ENCODE measurements at regions of chr1 and their contacts with region 1.

Region 1: GRCh38 chr1:40450495-40451237 is 390 bp downstream of the ZFP69B start:
- DNase-seq: peak; percentile 19 to 83 (median 48)
- ATAC-seq: peak; percentile 65 to 76 (median 74)
- H3K4me3 ChIP-seq: peak overlapping the region; percentile 59 to 90
- H3K4me3 Mint-ChIP-seq: peak overlapping the region; percentile 84 to 94 (median 87)
- H3K27ac ChIP-seq: peak overlapping the region; percentile 76
- H3K27ac Mint-ChIP-seq: peak overlapping the region; percentile 86 to 87
- H3K4me1 ChIP-seq: peaks cover 7 to 18% of the 10 kb centered on the region in 2 experiments
- H3K4me1 Mint-ChIP-seq: peaks cover 21 to 25% (median 24%) of the 10 kb centered on the region in 3 donors
- H3K27me3 ChIP-seq: no peaks in the 10 kb centered on the region
- H3K27me3 Mint-ChIP-seq: no peaks in the 10 kb centered on the region

Region 2: GRCh38 chr1:40476924-40477677 is 26.4 kb after region 1 on chr1 and contains the start of gene ZFP69:
- CTCF ChIA-PET with region 1: interaction called in 1 of 2 experiments, 7 read pairs
- POLR2A ChIA-PET with region 1: interaction called in 1 of 2 experiments, 15 read pairs
- DNase-seq: peak; percentile 38 to 81 (median 63)
- ATAC-seq: peak; percentile 89 to 95 (median 94)
- H3K4me3 ChIP-seq: peak within 1 kb of the TSS; percentile 61 to 81
- H3K4me3 Mint-ChIP-seq: peak within 1 kb of the TSS; percentile 82 to 89 (median 84)
- H3K27ac ChIP-seq: peak within 1 kb of the TSS; percentile 35
- H3K27ac Mint-ChIP-seq: peak within 1 kb of the TSS; percentile 80 to 86
- H3K4me1 ChIP-seq: peaks cover 9 to 11% of the 10 kb centered on the region in 2 experiments
- H3K4me1 Mint-ChIP-seq: peaks cover 21 to 26% (median 25%) of the 10 kb centered on the region in 3 donors
- H3K27me3 ChIP-seq: no peaks in the 10 kb centered on the region
- H3K27me3 Mint-ChIP-seq: no peaks in the 10 kb centered on the region
- total RNA-seq, gene ZFP69: 3.9 to 4.5 (median 4.1) TPM

Region 3: DNA sequence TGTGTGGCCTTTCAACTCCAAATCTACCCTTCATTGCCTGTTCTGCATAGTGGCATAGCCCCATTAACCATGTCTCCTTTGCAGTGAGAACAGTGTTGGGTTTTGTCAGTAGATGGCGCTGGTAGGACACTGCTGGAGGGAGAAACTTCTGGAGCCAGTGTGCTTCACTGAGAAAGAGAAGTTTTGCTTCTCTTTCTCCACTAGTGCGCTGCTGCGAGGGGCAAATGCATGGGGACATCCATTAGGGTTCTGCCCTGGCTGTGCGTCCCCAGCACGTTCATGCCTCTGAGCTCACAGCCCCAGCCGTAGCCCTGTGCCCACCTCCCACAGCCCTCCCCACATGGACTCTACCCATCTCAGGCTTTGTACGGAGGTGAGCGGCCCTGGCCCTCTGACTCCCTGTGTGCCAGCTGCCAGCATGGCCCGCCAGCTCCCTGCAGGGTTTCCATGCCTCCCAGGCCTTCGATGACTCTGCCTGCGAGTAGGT is 161.7 kb after region 1 on chr1:
- CTCF ChIA-PET with region 1: no interaction called
- POLR2A ChIA-PET with region 1: interaction called in 1 of 2 experiments, 11 read pairs
- DNase-seq: peak in 34 of 35 experiments; percentile 14 to 83 (median 57)
- ATAC-seq: peak; percentile 79 to 85 (median 82)
- H3K4me3 ChIP-seq: no peak overlapping the region
- H3K4me3 Mint-ChIP-seq: no peak overlapping the region
- H3K27ac ChIP-seq: no peak overlapping the region
- H3K27ac Mint-ChIP-seq: no peak overlapping the region
- H3K4me1 ChIP-seq: no peaks in the 10 kb centered on the region
- H3K4me1 Mint-ChIP-seq: no peaks in the 10 kb centered on the region
- H3K27me3 ChIP-seq: peaks cover 0 to 5% of the 10 kb centered on the region in 2 experiments
- H3K27me3 Mint-ChIP-seq: peaks cover 0 to 3% of the 10 kb centered on the region in 2 donors